Activated B cell treated with CpG ODN at 0.5 μM for 24 hours (primary cell): ENCODE measurements at regions of chr15 and their contacts with region 1.

Region 1: DNA sequence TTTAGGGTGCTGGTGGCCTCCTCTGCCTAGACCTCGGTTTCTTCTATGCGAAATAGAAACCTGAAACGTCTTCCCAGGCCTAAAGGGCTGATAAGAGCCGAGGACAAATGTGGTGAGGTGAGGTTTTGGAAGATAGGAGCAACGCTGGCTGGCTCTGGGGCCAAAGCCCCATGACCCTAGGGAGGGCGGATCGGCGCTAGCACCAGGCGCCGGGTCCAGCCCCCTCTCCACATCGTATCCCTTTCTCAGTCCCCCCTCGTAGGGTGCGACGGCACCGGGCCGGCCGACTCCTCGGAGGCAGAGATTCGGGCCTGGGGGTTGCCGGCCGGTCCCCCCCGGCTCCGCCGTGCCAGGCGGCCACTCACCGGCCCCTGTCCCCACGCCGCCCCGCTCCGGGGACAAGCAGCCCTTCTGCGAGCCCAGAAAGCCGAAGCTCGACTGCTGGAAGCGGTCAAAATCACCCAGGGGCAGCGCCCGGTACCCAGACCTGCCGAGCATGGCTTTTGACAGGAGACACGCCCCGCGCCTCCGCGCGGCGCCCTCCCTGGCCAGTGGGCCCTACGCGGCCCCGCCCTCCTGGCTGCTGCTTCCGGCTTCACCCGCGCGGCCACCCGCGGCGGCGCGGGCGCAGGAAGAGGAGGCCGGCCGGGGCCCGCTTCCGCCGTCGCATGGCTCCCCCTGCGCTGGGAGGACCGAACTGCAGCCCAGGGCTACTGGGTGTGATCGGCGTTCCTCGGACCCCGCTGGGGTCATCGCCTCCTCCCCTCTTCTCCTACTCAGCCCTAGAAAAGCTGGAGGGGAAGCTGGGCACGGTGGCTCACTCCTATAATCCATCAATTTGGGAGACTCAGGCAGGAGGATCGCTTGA is at the start of gene STOML1:
- DNase-seq: peak; percentile 98
- ATAC-seq: peak; percentile 77
- H3K4me3 Mint-ChIP-seq: peak within 1 kb of the TSS; percentile 86
- H3K27ac Mint-ChIP-seq: peak within 1 kb of the TSS; percentile 69
- H3K4me1 Mint-ChIP-seq: peaks cover 66% of the 10 kb centered on the region
- H3K27me3 Mint-ChIP-seq: no peaks in the 10 kb centered on the region
- CTCF ChIP-seq: no peak
- total RNA-seq, gene STOML1: 8.9 and 10.6 TPM in 2 replicates

Region 2: GRCh38 chr15:72604794-72605193 is 1387.2 kb before region 1 on chr15:
- CTCF ChIA-PET with region 1: no interaction called
- POLR2A ChIA-PET with region 1: no interaction called
- intact Hi-C with region 1: no loop called
- DNase-seq: no peak
- ATAC-seq: no peak
- H3K4me3 Mint-ChIP-seq: no peak overlapping the region
- H3K27ac Mint-ChIP-seq: no peak overlapping the region
- H3K4me1 Mint-ChIP-seq: no peaks in the 10 kb centered on the region
- H3K27me3 Mint-ChIP-seq: no peaks in the 10 kb centered on the region
- CTCF ChIP-seq: no peak

Region 3: GRCh38 chr15:74007820-74008371 is 15.9 kb after region 1 on chr15:
- CTCF ChIA-PET with region 1: interaction called, 8 read pairs
- POLR2A ChIA-PET with region 1: interaction called, 39 read pairs
- intact Hi-C with region 1: loop called (anchors 1 kb)
- DNase-seq: no peak
- ATAC-seq: peak; percentile 90
- H3K4me3 Mint-ChIP-seq: peak overlapping the region; percentile 39
- H3K27ac Mint-ChIP-seq: peak overlapping the region; percentile 84
- H3K4me1 Mint-ChIP-seq: peaks cover 61% of the 10 kb centered on the region
- H3K27me3 Mint-ChIP-seq: no peaks in the 10 kb centered on the region
- CTCF ChIP-seq: no peak